ENCODE measurements at regions of chr15 and their contacts with region 1.

Region 1: GRCh38 chr15:77959432-77959879 is 118.1 kb downstream of the TBC1D2B start:
- DNase-seq: peak; percentile 66 to 80
- ATAC-seq: peak; percentile 90 to 100 (median 99)
- H3K4me3 ChIP-seq: no peak overlapping the region
- H3K4me3 Mint-ChIP-seq: no peak overlapping the region
- H3K27ac ChIP-seq: no peak overlapping the region
- H3K27ac Mint-ChIP-seq: no peak overlapping the region
- H3K4me1 ChIP-seq: peaks cover 6% of the 10 kb centered on the region
- H3K4me1 Mint-ChIP-seq: peaks cover 7 to 11% of the 10 kb centered on the region in 2 donors
- H3K27me3 ChIP-seq: no peaks in the 10 kb centered on the region
- H3K27me3 Mint-ChIP-seq: peaks cover 17 to 50% of the 10 kb centered on the region in 2 donors
- CTCF ChIP-seq: peak; percentile 93

Region 2: DNA sequence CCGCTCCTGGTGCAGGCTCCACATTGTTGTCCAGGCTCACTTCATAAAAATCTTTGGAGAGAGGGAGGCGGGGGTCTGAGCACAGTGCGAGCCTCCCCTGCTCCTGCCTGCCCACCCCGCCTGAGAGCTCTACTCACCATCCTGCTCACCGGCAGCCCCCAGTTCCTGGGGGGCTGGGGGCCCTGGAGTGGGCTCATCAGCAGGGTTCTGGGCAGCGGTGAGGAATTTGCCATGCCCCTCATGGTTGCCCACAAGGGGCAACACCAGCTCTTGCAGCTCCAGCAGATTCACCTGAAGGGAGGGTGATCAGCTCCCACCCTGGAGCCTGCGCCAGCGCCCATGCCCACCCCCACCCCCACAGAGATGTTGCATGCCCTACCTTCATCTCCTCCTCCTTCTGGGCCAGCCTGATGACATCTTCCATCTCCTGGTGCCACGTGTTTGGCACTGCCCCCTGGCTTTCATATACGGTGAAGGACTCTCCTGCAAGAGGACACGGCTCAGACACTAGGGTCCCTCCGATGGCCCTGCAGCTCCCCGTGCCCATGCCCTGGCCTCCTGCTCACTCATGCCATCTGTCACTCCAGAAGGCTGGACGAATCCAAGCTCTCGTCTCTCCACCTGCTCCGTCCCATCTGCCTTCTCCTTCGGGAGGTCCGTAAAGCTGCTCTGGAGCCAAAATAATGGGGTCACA is 44.0 kb before region 1 on chr15:
- intact Hi-C with region 1: no loop called
- DNase-seq: no peak
- ATAC-seq: no peak
- H3K4me3 ChIP-seq: no peak overlapping the region
- H3K4me3 Mint-ChIP-seq: no peak overlapping the region
- H3K27ac ChIP-seq: no peak overlapping the region
- H3K27ac Mint-ChIP-seq: no peak overlapping the region
- H3K4me1 ChIP-seq: no peaks in the 10 kb centered on the region
- H3K4me1 Mint-ChIP-seq: peaks cover 0 to 4% of the 10 kb centered on the region in 2 donors
- H3K27me3 ChIP-seq: no peaks in the 10 kb centered on the region
- H3K27me3 Mint-ChIP-seq: peaks cover 15 to 18% of the 10 kb centered on the region in 2 donors
- CTCF ChIP-seq: no peak

Region 3: GRCh38 chr15:78018946-78019644 is 59.6 kb after region 1 on chr15:
- intact Hi-C with region 1: no loop called
- DNase-seq: peak in 1 of 2 donors; percentile 50
- ATAC-seq: peak; percentile 64 to 77 (median 76)
- H3K4me3 ChIP-seq: no peak overlapping the region
- H3K4me3 Mint-ChIP-seq: no peak overlapping the region
- H3K27ac ChIP-seq: no peak overlapping the region
- H3K27ac Mint-ChIP-seq: peak overlapping the region in 1 of 2 donors; percentile 69
- H3K4me1 ChIP-seq: peaks cover 7% of the 10 kb centered on the region
- H3K4me1 Mint-ChIP-seq: peaks cover 7 to 8% of the 10 kb centered on the region in 2 donors
- H3K27me3 ChIP-seq: no peaks in the 10 kb centered on the region
- H3K27me3 Mint-ChIP-seq: no peaks in the 10 kb centered on the region
- CTCF ChIP-seq: no peak

Region 4: DNA sequence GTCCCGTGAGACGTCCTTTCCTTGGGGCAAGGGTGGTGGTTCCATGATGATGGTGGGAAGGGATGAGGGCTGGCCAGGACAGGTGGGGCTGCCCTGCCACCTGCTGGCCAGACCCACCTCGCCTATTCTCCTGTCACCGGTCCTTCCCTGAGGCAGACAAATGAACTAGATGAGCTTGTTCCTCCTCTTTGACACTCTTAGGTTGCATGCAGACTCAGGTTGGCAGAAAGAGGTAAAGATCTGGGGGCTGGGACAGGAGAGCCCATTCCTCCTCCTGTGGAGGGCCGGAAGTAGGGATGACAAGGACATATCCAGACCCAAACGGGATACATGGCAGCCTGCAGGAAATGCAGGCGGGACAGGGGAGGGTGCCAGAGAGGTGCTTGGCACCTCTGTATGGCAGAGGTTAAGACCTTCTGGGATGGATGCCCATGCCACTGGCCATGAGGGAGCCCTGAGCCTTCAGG is 236.3 kb after region 1 on chr15:
- intact Hi-C with region 1: loop called (anchors 2 kb)
- DNase-seq: peak; percentile 37 to 76
- ATAC-seq: peak in 2 of 3 donors; percentile 80 to 81
- H3K4me3 ChIP-seq: no peak overlapping the region
- H3K4me3 Mint-ChIP-seq: no peak overlapping the region
- H3K27ac ChIP-seq: no peak overlapping the region
- H3K27ac Mint-ChIP-seq: no peak overlapping the region
- H3K4me1 ChIP-seq: no peaks in the 10 kb centered on the region
- H3K4me1 Mint-ChIP-seq: no peaks in the 10 kb centered on the region
- H3K27me3 ChIP-seq: no peaks in the 10 kb centered on the region
- H3K27me3 Mint-ChIP-seq: peaks cover 0 to 8% of the 10 kb centered on the region in 2 donors
- CTCF ChIP-seq: peak; percentile 68

Region 5: GRCh38 chr15:78241007-78241406 is 281.6 kb after region 1 on chr15:
- intact Hi-C with region 1: loop called (anchors 1 kb)
- DNase-seq: peak; percentile 75 to 87
- ATAC-seq: peak; percentile 83 to 97 (median 95)
- H3K4me3 ChIP-seq: no peak overlapping the region
- H3K4me3 Mint-ChIP-seq: no peak overlapping the region
- H3K27ac ChIP-seq: no peak overlapping the region
- H3K27ac Mint-ChIP-seq: no peak overlapping the region
- H3K4me1 ChIP-seq: no peaks in the 10 kb centered on the region
- H3K4me1 Mint-ChIP-seq: no peaks in the 10 kb centered on the region
- H3K27me3 ChIP-seq: no peaks in the 10 kb centered on the region
- H3K27me3 Mint-ChIP-seq: no peaks in the 10 kb centered on the region
- CTCF ChIP-seq: peak; percentile 80

Region 6: DNA sequence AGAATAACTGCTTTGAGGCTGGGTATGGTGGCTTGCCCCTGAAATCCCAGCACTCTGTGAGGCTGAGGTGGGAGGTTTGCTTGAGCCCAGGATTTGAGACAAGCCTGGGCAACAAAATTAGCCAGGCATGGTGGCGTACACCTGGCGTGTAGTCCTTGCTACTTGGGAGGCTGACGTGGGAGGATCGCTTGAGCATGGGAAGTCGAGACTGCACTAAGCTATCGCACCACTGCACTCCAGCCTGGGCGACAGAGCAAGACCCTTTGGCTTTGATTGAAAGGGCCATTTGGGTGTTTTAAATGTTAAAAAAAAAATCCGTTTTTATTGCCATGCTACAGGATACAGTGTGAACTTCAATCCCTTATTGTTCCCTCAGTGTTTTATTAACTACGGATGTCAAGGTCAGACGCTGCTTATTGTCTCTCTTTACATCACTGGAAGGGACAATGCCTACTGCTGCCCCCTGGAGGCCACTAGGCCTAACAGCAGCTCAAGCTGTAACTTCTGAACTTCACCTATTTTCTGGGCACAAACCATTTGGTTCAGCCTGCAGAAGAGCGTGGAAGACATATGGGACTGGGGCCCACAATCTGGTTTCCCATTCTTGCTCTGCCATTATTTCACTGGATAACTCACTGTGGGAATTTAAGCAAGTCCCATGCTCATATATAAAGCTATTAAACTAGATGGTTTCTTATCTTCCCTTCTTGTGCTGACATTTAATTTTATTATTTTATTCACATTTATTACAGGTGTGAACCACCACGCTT is 463.3 kb after region 1 on chr15:
- intact Hi-C with region 1: loop called (anchors 5 kb)
- DNase-seq: peak; percentile 47 to 80
- ATAC-seq: peak; percentile 89 to 98 (median 96)
- H3K4me3 ChIP-seq: no peak overlapping the region
- H3K4me3 Mint-ChIP-seq: no peak overlapping the region
- H3K27ac ChIP-seq: no peak overlapping the region
- H3K27ac Mint-ChIP-seq: no peak overlapping the region
- H3K4me1 ChIP-seq: no peaks in the 10 kb centered on the region
- H3K4me1 Mint-ChIP-seq: peaks cover 0 to 7% of the 10 kb centered on the region in 2 donors
- H3K27me3 ChIP-seq: no peaks in the 10 kb centered on the region
- H3K27me3 Mint-ChIP-seq: peaks cover 15 to 30% of the 10 kb centered on the region in 2 donors
- CTCF ChIP-seq: peak; percentile 94